ENCODE measurements at regions of chr15 and their contacts with region 1.

Region 1: GRCh38 chr15:90716976-90717821 is at the start of gene BLM:
- DNase-seq: peak; percentile 97
- H3K4me3 Mint-ChIP-seq: peak within 1 kb of the TSS; percentile 90
- H3K27ac Mint-ChIP-seq: peak within 1 kb of the TSS; percentile 96
- H3K4me1 Mint-ChIP-seq: peaks cover 38% of the 10 kb centered on the region
- H3K27me3 Mint-ChIP-seq: no peaks in the 10 kb centered on the region
- total RNA-seq, gene BLM: 64.3 and 65.1 TPM in 2 replicates

Region 2: DNA sequence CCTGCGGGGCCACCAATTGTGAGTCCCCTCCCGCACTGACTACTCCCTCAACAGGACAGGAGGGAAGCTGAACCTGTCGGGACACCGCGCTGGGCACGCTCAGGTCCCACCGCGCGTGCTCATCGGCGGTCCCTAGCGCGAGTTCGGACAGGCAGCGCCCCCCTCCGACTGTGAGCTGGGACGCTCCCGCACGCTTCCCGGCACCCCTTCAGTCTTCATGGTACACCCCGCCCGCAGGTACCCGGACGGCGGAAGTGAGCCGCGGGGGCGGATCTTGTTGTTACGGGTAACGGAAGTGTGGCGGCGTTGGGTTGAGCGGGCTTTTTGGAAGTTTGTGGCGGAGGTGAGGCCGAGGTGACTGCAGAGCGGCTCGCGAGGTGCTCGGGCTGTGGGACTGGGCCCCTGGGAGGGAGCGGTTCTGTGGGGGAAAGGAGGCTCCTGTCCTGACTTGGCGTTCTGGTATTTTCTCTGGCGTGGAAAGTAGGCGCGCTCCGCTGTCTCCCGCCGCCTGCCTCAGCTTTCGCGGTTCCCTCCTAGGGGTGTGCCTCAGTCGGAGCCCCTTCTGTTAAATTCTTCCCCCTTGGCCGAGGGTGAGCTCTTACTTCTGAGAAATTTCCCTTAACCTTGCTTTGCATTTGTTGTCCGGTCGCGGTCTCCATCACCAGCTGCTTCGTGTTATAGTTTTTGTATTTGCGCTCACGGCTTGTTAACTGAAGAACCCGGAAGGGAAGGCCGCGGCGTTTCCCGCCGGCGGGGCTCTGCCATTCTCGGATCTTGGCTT is 1473.3 kb before region 1 on chr15 and contains the start of gene FANCI:
- intact Hi-C with region 1: loop called (anchors 10 kb)
- DNase-seq: peak; percentile 95
- H3K4me3 Mint-ChIP-seq: peak within 1 kb of the TSS; percentile 96
- H3K27ac Mint-ChIP-seq: peak within 1 kb of the TSS; percentile 90
- H3K4me1 Mint-ChIP-seq: peaks cover 53% of the 10 kb centered on the region
- H3K27me3 Mint-ChIP-seq: peaks cover 9% of the 10 kb centered on the region
- total RNA-seq, gene FANCI: 167 and 172 TPM in 2 replicates

Region 3: GRCh38 chr15:90648137-90649070 is 68.8 kb before region 1 on chr15:
- intact Hi-C with region 1: loop called (anchors 1 kb)
- DNase-seq: peak; percentile 75
- H3K4me3 Mint-ChIP-seq: peak overlapping the region; percentile 35
- H3K27ac Mint-ChIP-seq: peak overlapping the region; percentile 97
- H3K4me1 Mint-ChIP-seq: peaks cover 49% of the 10 kb centered on the region
- H3K27me3 Mint-ChIP-seq: no peaks in the 10 kb centered on the region

Region 4: DNA sequence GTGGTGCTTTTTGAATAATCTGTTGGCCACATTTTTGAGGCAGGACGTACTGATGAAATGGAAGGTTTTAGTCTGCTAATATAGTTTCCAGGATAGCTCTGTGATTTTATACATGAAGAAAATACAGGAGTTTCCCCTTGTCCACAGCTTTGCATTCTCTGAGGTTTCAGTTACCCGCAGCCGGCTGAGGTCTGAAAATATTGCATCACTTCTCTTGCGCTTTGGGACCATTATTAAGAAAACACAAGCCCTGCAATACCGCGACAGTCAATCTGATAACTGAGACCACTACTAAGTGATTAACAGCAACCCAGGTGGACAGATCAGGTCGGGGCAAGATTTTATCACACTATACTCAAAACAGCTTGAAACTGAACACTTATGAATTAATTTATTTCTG is 33.0 kb after region 1 on chr15:
- intact Hi-C with region 1: loop called (anchors 5 kb)
- DNase-seq: peak; percentile 9
- H3K4me3 Mint-ChIP-seq: peak overlapping the region; percentile 71
- H3K27ac Mint-ChIP-seq: peak overlapping the region; percentile 84
- H3K4me1 Mint-ChIP-seq: peaks cover 56% of the 10 kb centered on the region
- H3K27me3 Mint-ChIP-seq: no peaks in the 10 kb centered on the region

Region 5: DNA sequence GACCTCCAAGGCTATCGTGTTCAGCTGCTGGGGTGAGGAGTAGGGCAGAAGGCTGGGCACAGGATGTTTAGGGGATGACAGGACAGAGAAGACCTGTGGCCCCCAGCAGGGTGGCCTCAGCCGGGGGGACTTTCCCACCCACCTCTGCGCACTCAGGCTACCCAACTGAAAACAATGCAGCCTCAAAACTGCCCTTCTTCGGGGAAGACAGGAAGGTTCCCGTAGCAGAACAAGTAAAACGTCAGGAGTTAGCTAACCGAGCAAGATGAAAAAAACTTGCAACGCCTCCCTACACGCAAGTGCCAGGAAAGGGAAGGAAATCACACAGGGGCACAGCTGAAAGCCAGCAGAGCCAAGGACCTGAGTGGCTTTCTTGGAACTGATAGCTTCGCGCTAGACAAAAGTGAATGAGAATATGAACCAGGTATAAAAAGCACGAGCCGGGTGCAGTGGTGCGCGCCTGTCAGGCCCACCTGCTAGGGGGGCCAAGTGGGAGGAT is 112.8 kb after region 1 on chr15:
- intact Hi-C with region 1: loop called (anchors 1 kb)
- DNase-seq: peak; percentile 82
- H3K4me3 Mint-ChIP-seq: peak overlapping the region; percentile 75
- H3K27ac Mint-ChIP-seq: peak overlapping the region; percentile 91
- H3K4me1 Mint-ChIP-seq: peaks cover 69% of the 10 kb centered on the region
- H3K27me3 Mint-ChIP-seq: no peaks in the 10 kb centered on the region

Region 6: DNA sequence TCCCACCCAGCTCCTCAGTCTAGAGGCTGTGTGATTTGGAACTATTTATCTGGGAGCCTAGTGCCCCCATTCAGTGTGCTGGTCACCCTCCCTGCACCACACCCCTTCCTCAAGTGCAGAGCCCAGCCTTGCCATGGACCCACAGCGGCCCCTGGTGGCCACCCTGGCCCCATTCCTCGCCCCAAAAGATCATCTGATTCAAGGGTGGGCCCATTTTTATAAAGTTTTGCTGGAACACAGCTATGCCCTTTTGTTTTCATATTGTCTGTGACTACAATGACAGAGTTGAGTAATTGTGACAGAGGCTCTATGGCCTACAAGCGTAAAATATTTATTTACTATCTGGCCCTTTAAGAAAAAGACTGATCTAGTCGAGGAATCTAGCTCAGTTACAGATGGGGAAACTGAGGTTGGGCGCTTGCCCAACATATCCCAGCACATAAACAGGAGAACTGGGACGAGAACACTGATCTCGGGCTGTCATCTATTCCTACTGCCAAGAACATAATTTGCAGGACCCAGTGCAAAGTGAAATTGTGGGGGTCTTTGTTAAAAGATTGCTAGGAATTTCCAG is 168.9 kb after region 1 on chr15:
- intact Hi-C with region 1: loop called (anchors 1 kb)
- DNase-seq: peak; percentile 66
- H3K4me3 Mint-ChIP-seq: peak overlapping the region; percentile 51
- H3K27ac Mint-ChIP-seq: peak overlapping the region; percentile 87
- H3K4me1 Mint-ChIP-seq: peaks cover 50% of the 10 kb centered on the region
- H3K27me3 Mint-ChIP-seq: no peaks in the 10 kb centered on the region